ENCODE measurements at regions of chr5 and their contacts with region 1.

Region 1: GRCh38 chr5:147200001-147200400 is 34.8 kb upstream of the STK32A start:
- DNase-seq: no peak
- H3K4me3 ChIP-seq: no peak overlapping the region
- H3K27ac ChIP-seq: no peak overlapping the region
- H3K4me1 ChIP-seq: peaks cover 0 to 5% (median under 1%) of the 10 kb centered on the region in 4 experiments
- H3K27me3 ChIP-seq: no peaks in the 10 kb centered on the region

Region 2: GRCh38 chr5:147188200-147189108 is 11.5 kb before region 1 on chr5:
- CTCF ChIA-PET with region 1: interaction called, 12 read pairs
- POLR2A ChIA-PET with region 1: no interaction called
- DNase-seq: peak; percentile 59 to 88 (median 84)
- H3K4me3 ChIP-seq: peak overlapping the region in 1 of 7 experiments; percentile 42
- H3K27ac ChIP-seq: no peak overlapping the region
- H3K4me1 ChIP-seq: peaks cover 0 to 2% (median 0%) of the 10 kb centered on the region in 4 experiments
- H3K27me3 ChIP-seq: peaks cover 0 to 3% (median 0%) of the 10 kb centered on the region in 5 experiments

Region 3: DNA sequence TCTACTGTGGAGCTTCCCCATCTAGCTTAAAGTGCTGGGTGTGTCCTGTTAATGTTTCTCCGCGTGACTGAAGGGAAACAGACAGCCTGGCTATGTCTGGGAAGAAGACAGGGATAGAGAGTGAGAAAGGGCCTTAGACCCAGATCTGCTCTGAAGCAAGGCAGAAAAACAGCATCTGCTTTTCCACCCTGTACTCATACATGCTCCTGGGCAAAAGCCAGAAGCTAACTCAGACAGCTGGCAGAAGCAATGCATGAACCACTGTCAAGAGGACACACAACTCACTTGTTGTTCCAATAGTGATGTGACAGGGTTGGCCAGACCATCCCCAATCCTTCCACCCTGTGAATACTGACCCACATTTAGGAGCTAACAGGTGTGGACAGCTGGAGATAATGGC is 246.5 kb after region 1 on chr5:
- CTCF ChIA-PET with region 1: no interaction called
- POLR2A ChIA-PET with region 1: no interaction called
- DNase-seq: no peak
- H3K4me3 ChIP-seq: no peak overlapping the region
- H3K27ac ChIP-seq: no peak overlapping the region
- H3K4me1 ChIP-seq: no peaks in the 10 kb centered on the region
- H3K27me3 ChIP-seq: peaks cover 0 to 16% (median 3%) of the 10 kb centered on the region in 5 experiments